MCF 10A (cell line): ENCODE measurements at regions of chr17 and their contacts with region 1.

Region 1: GRCh38 chr17:57987580-57988421 is at the start of gene VEZF1:
- DNase-seq: peak; percentile 66
- H3K4me3 Mint-ChIP-seq: peak within 1 kb of the TSS; percentile 99
- H3K27ac Mint-ChIP-seq: peak within 1 kb of the TSS; percentile 95
- H3K4me1 Mint-ChIP-seq: peaks cover 34% of the 10 kb centered on the region
- H3K27me3 Mint-ChIP-seq: no peaks in the 10 kb centered on the region
- CTCF ChIP-seq: no peak
- total RNA-seq, gene VEZF1: 66.8 and 69.1 TPM in 2 replicates

Region 2: DNA sequence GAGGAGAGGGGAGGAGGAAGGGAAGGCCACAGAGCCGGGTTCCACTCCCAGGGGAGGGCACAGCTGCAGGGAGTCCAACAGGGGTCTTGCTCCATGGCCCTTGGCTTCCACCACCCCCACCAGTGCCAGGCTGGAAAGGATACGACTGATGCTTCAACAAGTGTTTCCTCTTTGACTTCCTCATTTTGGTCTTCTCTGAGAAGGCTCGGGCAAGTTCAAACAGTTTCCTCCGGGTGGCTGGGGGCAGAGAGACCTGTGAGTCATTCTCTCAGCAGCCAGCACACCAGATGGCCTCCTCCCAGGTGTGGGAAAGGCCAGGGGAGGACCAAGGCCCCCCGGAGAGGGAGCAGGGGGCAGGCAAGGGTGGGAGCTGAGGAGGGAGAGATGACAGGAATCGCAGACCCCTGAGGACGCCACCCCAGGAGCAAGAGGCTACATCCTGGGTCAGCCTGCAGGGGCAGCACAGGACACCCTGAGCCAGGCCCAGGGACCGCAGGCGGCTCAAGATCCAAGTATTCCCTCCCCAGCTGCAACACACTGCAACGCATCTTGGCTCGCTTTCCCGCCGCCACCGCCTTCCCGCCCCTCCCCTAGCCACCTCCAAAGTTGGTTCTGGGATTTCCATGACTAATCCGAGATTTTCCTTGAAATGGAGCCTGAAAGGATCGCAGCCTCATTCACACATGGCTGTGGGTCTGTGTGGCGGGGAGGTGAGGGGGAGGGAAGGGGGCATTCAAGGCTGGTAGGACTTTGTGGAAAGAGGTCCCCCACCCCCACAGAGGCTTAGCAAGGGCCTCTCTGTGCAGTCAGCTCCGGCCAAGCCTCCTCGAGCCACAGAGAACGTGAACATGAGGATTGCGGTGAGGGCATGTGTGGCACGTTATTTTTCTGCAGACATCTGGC is 119.5 kb before region 1 on chr17:
- CTCF ChIA-PET with region 1: interaction called, 5 read pairs
- POLR2A ChIA-PET with region 1: interaction called, 40 read pairs
- intact Hi-C with region 1: loop called (anchors 2 kb)
- DNase-seq: peak; percentile 93
- H3K4me3 Mint-ChIP-seq: peak overlapping the region; percentile 41
- H3K27ac Mint-ChIP-seq: peak overlapping the region; percentile 93
- H3K4me1 Mint-ChIP-seq: peaks cover 33% of the 10 kb centered on the region
- H3K27me3 Mint-ChIP-seq: no peaks in the 10 kb centered on the region
- CTCF ChIP-seq: peak; percentile 65

Region 3: GRCh38 chr17:57892146-57892828 is 95.5 kb before region 1 on chr17:
- CTCF ChIA-PET with region 1: interaction called, 4 read pairs
- POLR2A ChIA-PET with region 1: interaction called, 36 read pairs
- intact Hi-C with region 1: loop called (anchors 1 kb)
- DNase-seq: peak; percentile 91
- H3K4me3 Mint-ChIP-seq: peak overlapping the region; percentile 64
- H3K27ac Mint-ChIP-seq: peak overlapping the region; percentile 87
- H3K4me1 Mint-ChIP-seq: peaks cover 41% of the 10 kb centered on the region
- H3K27me3 Mint-ChIP-seq: no peaks in the 10 kb centered on the region
- CTCF ChIP-seq: peak; percentile 96

Region 4: GRCh38 chr17:57937492-57937891 is 50.3 kb before region 1 on chr17:
- CTCF ChIA-PET with region 1: no interaction called
- POLR2A ChIA-PET with region 1: interaction called, 4 read pairs
- intact Hi-C with region 1: loop called (anchors 1 kb)
- DNase-seq: no peak
- H3K4me3 Mint-ChIP-seq: no peak overlapping the region
- H3K27ac Mint-ChIP-seq: no peak overlapping the region
- H3K4me1 Mint-ChIP-seq: peaks cover 13% of the 10 kb centered on the region
- H3K27me3 Mint-ChIP-seq: no peaks in the 10 kb centered on the region
- CTCF ChIP-seq: no peak

Region 5: DNA sequence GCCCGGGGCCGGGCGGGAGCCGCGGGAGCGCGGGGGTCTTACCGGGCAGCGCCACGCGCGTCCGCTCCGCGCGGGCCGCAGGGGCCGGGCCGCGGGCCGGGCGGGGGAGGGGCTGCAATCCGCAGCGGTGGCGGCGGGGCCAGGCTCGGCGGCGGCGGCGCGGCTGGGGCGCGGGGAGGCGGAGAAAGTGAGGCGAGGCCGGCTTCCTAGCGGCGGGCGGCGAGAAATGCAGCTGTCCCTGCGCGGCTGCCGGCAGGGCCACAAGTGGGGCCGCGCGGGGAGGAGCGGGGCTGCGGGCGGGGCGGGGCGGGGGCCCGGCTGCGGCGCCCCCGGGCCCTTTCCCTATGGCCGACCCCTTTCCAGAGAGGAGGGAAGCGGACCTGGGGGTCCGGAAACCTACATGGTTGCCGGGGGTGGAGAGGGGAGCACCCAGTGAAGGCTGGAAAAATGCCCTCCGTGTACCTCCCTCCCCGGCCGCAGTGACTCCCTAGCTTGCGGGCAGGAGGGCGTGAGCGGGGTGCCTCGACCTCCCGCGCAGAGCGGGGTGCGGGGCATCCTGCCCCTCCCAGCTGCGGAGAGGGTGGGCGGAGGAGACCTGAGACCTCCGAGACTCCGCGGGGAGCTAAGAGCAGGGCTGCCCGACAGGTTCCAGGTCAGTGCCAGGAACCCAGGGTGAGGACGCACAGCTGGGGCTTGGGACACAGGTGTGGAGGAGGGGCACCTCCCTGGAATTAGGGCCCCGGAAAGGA is 32.4 kb before region 1 on chr17 and contains the start of gene CUEDC1:
- CTCF ChIA-PET with region 1: interaction called, 4 read pairs
- POLR2A ChIA-PET with region 1: interaction called, 55 read pairs
- intact Hi-C with region 1: loop called (anchors 2 kb)
- DNase-seq: peak; percentile 53
- H3K4me3 Mint-ChIP-seq: peak within 1 kb of the TSS; percentile 70
- H3K27ac Mint-ChIP-seq: no peak within 1 kb of the TSS
- H3K4me1 Mint-ChIP-seq: peaks cover 22% of the 10 kb centered on the region
- H3K27me3 Mint-ChIP-seq: no peaks in the 10 kb centered on the region
- CTCF ChIP-seq: peak; percentile 23
- total RNA-seq, gene CUEDC1: 15.6 and 21.5 TPM in 2 replicates